HAP-1 (cell line): ENCODE measurements at regions of chr2 and their contacts with region 1.

Region 1: GRCh38 chr2:219160186-219161017 is at the start of gene NHEJ1:
- DNase-seq: peak; percentile 82 to 98
- H3K4me3 ChIP-seq: peak within 1 kb of the TSS; percentile 62
- H3K4me1 ChIP-seq: peaks cover 17% of the 10 kb centered on the region
- H3K27me3 ChIP-seq: no peaks in the 10 kb centered on the region

Region 2: GRCh38 chr2:219294356-219295351 is 134.3 kb after region 1 on chr2:
- in situ Hi-C with region 1: loop called (anchors 5 kb)
- DNase-seq: peak; percentile 69 to 90
- H3K4me3 ChIP-seq: peak overlapping the region; percentile 36
- H3K4me1 ChIP-seq: peaks cover 7% of the 10 kb centered on the region
- H3K27me3 ChIP-seq: peaks cover 8% of the 10 kb centered on the region; the same call in 1 of the 2 replicates

Region 3: DNA sequence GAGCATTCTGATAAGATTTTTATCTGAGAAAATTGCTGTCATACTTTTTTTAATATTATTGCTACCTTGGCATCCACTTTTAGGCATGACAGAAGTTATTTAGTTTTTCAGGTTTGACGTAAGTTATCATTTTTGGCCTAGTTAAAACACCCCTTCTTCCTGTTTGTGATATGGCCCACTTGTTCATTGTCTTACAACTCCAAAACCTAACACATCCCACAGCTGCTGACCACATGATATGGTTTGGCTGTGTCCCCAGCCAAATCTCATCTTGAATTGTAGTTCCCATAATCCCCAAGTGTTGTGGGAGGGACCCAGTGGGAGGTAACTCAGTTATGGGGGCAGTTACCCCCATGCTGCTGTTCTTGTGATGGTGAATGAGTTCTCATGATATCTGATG is 855.2 kb after region 1 on chr2:
- in situ Hi-C with region 1: no loop called
- DNase-seq: no peak
- H3K4me3 ChIP-seq: no peak overlapping the region
- H3K4me1 ChIP-seq: no peaks in the 10 kb centered on the region
- H3K27me3 ChIP-seq: no peaks in the 10 kb centered on the region